Right cardiac atrium (tissue), 5 donors: ENCODE measurements at regions of chr10 and their contacts with region 1.

Region 1: DNA sequence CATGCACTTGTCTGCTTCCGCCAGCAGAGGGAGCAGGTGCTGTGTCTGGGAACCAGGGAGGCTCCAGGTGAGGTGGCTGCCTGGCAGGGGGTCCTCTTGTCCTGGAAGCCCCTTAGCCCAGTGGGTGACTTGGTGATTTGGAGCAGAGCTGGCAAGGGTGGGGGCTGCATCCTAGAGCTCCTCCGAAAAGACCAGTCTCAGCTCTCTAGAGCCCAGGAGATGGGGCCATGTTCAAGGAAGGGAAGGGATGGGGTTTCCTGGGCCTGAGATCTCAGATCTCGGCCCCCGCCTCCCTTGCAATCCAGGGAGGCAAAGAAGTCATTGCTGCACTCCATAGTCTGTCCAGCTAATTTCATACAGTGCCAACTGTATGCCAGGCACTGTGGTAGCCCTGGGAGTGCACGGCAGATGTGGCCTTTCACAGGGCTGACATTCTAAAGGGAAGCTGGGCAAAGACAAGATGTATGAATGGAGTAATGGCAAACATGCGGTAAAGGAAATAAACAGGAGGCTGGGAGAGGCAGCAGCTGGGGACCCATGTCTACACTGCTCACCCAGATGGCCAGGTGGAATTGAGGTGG is 20.4 kb upstream of the SFRP5 start:
- DNase-seq: peak; percentile 62 to 87 (median 81)
- ATAC-seq: peak; percentile 29 to 39
- H3K4me3 ChIP-seq: no peak overlapping the region
- H3K27ac ChIP-seq: no peak overlapping the region
- H3K4me1 ChIP-seq: no peaks in the 10 kb centered on the region
- H3K27me3 ChIP-seq: no peaks in the 10 kb centered on the region

Region 2: GRCh38 chr10:97861097-97861750 is 69.0 kb after region 1 on chr10:
- intact Hi-C with region 1: loop called in 2 of 4 experiments (anchors 5 to 10 kb)
- DNase-seq: no peak
- ATAC-seq: peak; percentile 46 to 53
- H3K4me3 ChIP-seq: no peak overlapping the region
- H3K27ac ChIP-seq: no peak overlapping the region
- H3K4me1 ChIP-seq: no peaks in the 10 kb centered on the region
- H3K27me3 ChIP-seq: no peaks in the 10 kb centered on the region

Region 3: DNA sequence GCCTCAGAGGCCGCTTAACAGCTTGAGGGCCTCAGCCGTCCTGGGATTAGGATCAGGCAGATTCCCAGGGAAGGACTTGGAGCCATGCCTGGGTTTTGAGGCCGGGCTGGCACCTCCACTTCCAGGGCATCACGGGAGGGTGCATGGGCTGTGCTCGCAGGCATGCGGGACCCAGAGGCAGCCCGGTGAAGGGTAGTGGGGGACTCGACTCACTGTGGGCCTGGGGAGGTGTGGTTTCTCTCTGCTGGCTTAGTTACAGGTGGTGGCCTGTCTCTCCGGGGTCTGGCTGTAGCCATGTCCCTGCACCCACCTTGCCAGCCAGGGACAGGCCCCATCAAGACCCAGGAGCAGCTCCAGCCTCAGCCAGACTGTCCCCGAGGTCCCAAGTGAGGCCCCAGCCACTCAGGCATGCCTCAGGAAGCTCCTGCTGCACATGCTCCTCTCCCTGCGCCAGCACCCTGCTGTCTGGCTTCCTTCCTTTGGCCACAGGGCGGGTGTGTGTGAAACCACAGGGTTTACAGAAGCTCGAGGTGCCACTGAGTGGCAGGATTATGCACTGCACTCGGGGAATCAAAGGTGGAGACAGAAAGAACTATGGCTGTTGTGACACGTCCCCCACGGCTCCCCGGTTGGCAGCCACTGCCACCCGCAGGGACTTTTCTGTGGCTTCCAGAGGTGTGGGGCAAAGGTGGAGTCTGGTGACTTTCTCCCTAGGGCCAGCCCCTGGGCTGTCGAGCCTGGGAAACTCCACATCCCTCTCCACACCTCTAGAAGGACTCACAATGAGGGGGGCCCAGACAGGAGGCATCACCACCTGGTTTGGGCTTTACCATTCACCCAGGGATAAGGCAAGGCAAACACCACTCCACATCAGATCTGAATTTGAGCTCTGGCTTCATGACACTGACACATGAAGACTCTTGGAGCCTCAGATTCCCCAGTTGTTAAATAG is 77.1 kb after region 1 on chr10:
- intact Hi-C with region 1: loop called in 3 of 4 experiments (anchors 5 to 10 kb)
- DNase-seq: peak; percentile 82 to 92 (median 91)
- ATAC-seq: peak; percentile 92 to 93
- H3K4me3 ChIP-seq: no peak overlapping the region
- H3K27ac ChIP-seq: peak overlapping the region; percentile 6
- H3K4me1 ChIP-seq: no peaks in the 10 kb centered on the region
- H3K27me3 ChIP-seq: no peaks in the 10 kb centered on the region